ENCODE measurements at regions of chr3 and their contacts with region 1.

Region 1: GRCh38 chr3:172808969-172809546 is 58.5 kb downstream of the ECT2 start:
- DNase-seq: no peak
- ATAC-seq: no peak
- H3K4me3 ChIP-seq: no peak overlapping the region
- H3K27ac ChIP-seq: no peak overlapping the region
- H3K4me1 ChIP-seq: no peaks in the 10 kb centered on the region
- H3K27me3 ChIP-seq: no peaks in the 10 kb centered on the region
- CTCF ChIP-seq: peak in 2 of 5 experiments; percentile 16 to 39
- POLR2A ChIP-seq: no peak

Region 2: GRCh38 chr3:172530566-172530965 is 278.5 kb before region 1 on chr3:
- in situ Hi-C with region 1: no loop called
- intact Hi-C with region 1: no loop called
- DNase-seq: no peak
- ATAC-seq: no peak
- H3K4me3 ChIP-seq: no peak overlapping the region
- H3K27ac ChIP-seq: no peak overlapping the region
- H3K4me1 ChIP-seq: no peaks in the 10 kb centered on the region
- H3K27me3 ChIP-seq: no peaks in the 10 kb centered on the region
- CTCF ChIP-seq: no peak
- POLR2A ChIP-seq: no peak

Region 3: GRCh38 chr3:172787746-172788145 is 21.3 kb before region 1 on chr3:
- in situ Hi-C with region 1: no loop called
- intact Hi-C with region 1: loop called (anchors 1 kb)
- DNase-seq: no peak
- ATAC-seq: no peak
- H3K4me3 ChIP-seq: no peak overlapping the region
- H3K27ac ChIP-seq: no peak overlapping the region
- H3K4me1 ChIP-seq: no peaks in the 10 kb centered on the region
- H3K27me3 ChIP-seq: no peaks in the 10 kb centered on the region
- CTCF ChIP-seq: no peak
- POLR2A ChIP-seq: no peak